Tibial artery (tissue), 4 donors: ENCODE measurements at regions of chr1 and their contacts with region 1.

Region 1: DNA sequence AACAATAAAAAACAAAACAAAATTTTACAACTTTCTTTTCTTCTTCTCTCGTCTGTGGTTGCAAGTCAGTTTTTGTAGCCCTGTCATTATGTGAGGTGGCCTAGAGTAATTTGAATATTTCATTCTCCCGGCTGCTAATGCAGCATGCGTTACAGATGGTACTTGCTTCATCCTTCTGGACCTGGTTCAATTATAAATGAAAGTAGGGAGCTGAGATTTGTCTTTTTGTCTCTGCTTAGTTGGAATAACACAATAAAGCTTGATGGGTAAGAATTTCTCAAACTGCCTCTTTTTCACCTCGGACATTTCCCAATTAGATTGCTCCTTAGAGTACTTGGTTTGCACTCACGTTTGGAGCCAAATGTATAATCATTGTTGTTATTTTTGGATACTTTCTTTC is 201.6 kb downstream of the PBX1 start:
- DNase-seq: no peak
- H3K4me3 ChIP-seq: no peak overlapping the region
- H3K27ac ChIP-seq: peak overlapping the region in 1 of 2 donors; percentile 3
- H3K4me1 ChIP-seq: peaks cover 0 to 25% (median 14%) of the 10 kb centered on the region in 4 donors
- H3K27me3 ChIP-seq: no peaks in the 10 kb centered on the region
- CTCF ChIP-seq: no peak

Region 2: GRCh38 chr1:164720440-164721227 is 39.9 kb before region 1 on chr1:
- intact Hi-C with region 1: loop called (anchors 5 kb)
- DNase-seq: no peak
- H3K4me3 ChIP-seq: no peak overlapping the region
- H3K27ac ChIP-seq: no peak overlapping the region
- H3K4me1 ChIP-seq: peaks cover 3 to 72% (median 35%) of the 10 kb centered on the region in 4 donors
- H3K27me3 ChIP-seq: no peaks in the 10 kb centered on the region
- CTCF ChIP-seq: no peak